Left cardiac atrium (tissue), 4 donors: ENCODE measurements at regions of chr11 and their contacts with region 1.

Region 1: GRCh38 chr11:131977231-131977630 is 606.8 kb downstream of the NTM start:
- DNase-seq: no peak
- ATAC-seq: no peak

Region 2: DNA sequence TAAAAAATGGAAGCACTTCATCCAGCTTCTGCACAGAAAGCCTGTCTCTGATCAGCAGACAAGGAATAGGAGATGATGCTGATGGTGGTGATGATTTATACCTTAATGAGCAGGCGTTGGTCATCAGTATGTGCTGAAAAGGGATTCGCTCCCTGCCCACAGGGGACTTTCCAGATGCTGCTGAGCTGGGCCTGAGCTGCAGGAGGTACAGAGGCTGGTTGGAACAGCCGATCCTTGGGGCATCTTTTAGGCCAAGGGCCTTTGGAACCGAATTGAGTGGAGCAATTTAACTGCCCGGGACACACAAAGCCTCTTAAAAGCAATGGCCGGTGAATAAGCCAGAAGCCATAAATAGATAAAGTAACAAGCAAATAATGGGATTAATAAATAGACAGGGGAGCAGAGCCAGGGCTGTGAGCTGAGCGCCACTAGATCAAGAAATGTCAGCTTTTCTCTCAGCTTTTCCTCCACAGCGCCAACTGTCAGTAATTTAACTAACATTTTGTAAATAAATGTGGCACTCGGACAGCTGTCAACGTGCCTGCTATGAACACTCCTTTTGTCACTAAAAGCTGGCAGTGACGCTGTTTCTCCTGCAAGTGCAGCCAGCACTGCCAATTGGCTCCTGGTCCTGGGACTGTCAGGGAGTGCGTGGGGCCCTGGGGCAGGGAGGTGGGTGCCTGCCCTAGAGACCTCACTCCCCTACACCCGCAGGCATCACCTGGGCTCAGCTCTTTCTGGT is 44.5 kb before region 1 on chr11:
- intact Hi-C with region 1: loop called in 1 of 2 experiments (anchors 5 kb)
- DNase-seq: peak; percentile 71
- ATAC-seq: peak; percentile 86 to 90